Esophagus muscularis mucosa (tissue), 4 donors: ENCODE measurements at regions of chr17 and their contacts with region 1.

Region 1: GRCh38 chr17:34637548-34638525 is 58.5 kb downstream of the TMEM132E start:
- DNase-seq: no peak
- H3K4me3 ChIP-seq: peak overlapping the region; percentile 46 to 59 (median 50)
- H3K27ac ChIP-seq: no peak overlapping the region
- H3K4me1 ChIP-seq: peaks cover 3 to 14% (median 12%) of the 10 kb centered on the region in 4 donors
- H3K27me3 ChIP-seq: peaks cover 0 to 92% (median 4%) of the 10 kb centered on the region in 4 donors
- CTCF ChIP-seq: peak; percentile 65 to 88 (median 82)
- EP300 ChIP-seq: no peak
- POLR2A ChIP-seq: no peak

Region 2: DNA sequence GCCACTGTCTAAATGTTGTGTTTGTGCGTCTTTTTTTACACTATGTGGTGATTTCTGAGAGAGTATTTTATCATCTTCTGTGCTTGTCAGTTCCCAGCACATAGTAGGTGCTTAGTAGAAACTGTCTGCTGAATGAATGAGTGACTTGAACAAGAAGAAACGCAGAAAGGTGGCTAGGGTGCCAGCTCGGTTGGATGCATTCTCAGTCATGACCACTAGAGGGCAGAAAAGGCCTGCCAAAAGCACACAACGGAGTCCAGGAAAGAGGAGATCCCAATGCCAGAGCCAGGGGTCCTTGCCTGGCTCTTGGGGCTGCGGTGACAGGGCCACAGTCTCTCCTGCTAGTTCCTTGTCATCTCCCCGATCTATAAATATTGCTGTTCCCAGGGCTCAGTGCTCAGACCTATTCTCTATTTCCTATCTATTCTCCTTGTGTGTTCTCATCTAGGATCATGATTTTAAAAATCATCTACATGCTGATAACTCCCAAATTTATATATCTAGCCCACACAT is 217.5 kb before region 1 on chr17:
- intact Hi-C with region 1: loop called (anchors 1 kb)
- DNase-seq: no peak
- H3K4me3 ChIP-seq: no peak overlapping the region
- H3K27ac ChIP-seq: no peak overlapping the region
- H3K4me1 ChIP-seq: no peaks in the 10 kb centered on the region
- H3K27me3 ChIP-seq: peaks cover 0 to 76% (median 8%) of the 10 kb centered on the region in 4 donors
- CTCF ChIP-seq: peak in 2 of 3 experiments; percentile 89 to 93
- EP300 ChIP-seq: no peak
- POLR2A ChIP-seq: no peak

Region 3: DNA sequence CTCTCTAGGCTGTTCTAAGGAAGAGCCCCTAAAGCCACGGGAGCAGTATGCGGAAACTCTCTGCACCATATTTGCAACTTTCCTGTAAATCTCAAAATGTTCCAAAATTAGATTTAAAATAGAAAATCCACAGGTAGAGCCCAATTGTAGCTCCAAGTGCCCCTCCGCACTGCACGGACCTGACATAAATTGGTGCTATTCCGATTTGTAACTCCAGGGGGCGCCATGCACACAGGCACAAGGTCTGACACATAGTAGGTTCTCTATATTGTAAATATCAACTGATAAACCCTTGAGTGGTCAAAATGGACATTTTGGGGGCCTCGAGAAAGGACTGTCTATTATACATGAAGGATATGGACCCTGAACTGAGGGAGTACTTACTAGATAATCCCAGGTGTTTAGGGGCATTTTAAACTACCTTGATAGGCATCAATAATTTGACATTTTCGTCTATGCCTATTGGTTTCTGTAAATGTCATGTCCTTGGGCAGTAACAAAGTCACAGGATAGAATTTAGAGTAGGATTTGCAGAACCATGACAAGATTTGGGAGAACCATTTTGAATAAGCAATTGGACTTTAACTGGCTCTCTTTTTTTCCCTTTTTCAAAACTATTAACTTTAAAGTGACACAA is 95.0 kb before region 1 on chr17:
- intact Hi-C with region 1: loop called (anchors 2 kb)
- DNase-seq: no peak
- H3K4me3 ChIP-seq: no peak overlapping the region
- H3K27ac ChIP-seq: no peak overlapping the region
- H3K4me1 ChIP-seq: no peaks in the 10 kb centered on the region
- H3K27me3 ChIP-seq: peaks cover 0 to 66% (median 0%) of the 10 kb centered on the region in 4 donors
- CTCF ChIP-seq: peak; percentile 70 to 82 (median 73)
- EP300 ChIP-seq: no peak
- POLR2A ChIP-seq: no peak